AG04450 (cell line): ENCODE measurements at regions of chr6 and their contacts with region 1.

Region 1: GRCh38 chr6:133973109-133973971 is 20.3 kb downstream of the TBPL1 start:
- DNase-seq: peak; percentile 42
- H3K4me3 ChIP-seq: no peak overlapping the region
- H3K27ac ChIP-seq: no peak overlapping the region
- H3K27me3 ChIP-seq: no peaks in the 10 kb centered on the region
- CTCF ChIP-seq: peak; percentile 73

Region 2: DNA sequence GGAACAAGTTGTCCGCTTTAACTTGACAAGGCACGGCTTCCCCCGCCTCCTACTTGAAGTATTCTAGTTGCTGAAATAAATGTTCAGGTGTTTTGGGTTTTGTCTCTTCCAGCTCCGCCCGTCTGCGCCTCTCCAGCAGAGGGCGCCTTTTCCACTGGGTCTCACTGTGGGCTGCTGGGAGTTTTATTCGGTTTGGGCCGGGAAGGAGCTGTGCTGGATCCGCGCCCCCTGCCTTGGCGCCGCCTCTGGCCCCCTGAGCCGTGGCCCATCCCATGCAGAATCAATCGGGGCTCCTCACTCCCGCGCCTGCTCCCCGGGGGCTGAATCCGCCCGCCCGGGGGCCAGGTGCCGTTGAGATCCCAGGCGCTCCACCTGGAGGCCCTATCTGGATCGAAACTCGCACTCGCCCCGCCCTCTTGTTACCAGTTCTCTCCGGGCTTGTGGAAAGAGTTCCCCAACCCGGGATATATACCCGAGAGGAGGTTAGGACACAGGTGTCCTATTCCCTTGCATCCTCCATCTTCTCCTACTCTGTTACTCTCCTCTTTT is 135.5 kb before region 1 on chr6:
- CTCF ChIA-PET with region 1: no interaction called
- POLR2A ChIA-PET with region 1: no interaction called
- DNase-seq: no peak
- H3K4me3 ChIP-seq: no peak overlapping the region
- H3K27ac ChIP-seq: no peak overlapping the region
- H3K27me3 ChIP-seq: no peaks in the 10 kb centered on the region
- CTCF ChIP-seq: peak; percentile 41

Region 3: DNA sequence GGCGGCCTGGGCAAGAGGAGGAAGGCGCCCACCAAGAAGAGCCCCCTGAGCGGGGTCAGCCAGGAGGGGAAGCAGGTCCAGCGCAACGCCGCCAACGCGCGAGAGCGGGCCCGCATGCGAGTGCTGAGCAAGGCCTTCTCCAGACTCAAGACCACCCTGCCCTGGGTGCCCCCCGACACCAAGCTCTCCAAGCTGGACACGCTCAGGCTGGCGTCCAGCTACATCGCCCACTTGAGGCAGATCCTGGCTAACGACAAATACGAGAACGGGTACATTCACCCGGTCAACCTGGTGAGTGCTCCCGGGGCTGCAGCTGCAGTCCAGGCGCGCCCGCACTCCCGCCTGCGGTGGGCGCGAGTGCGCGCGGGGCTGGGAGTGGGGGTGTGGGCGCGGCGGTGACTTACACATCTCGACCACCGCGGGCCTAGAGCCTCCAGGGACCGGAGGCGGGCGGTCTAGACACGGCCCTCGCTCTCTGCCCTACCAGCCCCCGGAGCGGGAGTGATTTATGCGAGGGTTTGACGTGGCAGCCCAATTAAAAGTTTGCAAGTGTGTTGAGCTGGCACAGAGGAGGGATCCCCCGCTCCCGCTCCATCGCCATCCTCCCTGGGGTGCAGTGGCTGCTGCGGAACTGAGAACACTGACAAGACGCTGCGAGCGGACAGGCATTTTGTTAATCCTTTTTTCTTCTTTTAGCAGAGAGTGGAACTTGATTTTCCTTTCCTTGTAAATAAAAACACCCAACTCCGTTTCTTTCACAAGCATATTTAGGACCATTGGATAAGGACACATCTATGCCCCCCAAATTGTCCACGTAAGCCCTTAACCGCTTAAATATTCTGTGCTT is 83.6 kb before region 1 on chr6:
- CTCF ChIA-PET with region 1: no interaction called
- POLR2A ChIA-PET with region 1: no interaction called
- DNase-seq: no peak
- H3K4me3 ChIP-seq: peak overlapping the region; percentile 98
- H3K27ac ChIP-seq: peak overlapping the region; percentile 97
- H3K27me3 ChIP-seq: no peaks in the 10 kb centered on the region
- CTCF ChIP-seq: peak; percentile 14; the same call in 1 of the 2 replicates

Region 4: DNA sequence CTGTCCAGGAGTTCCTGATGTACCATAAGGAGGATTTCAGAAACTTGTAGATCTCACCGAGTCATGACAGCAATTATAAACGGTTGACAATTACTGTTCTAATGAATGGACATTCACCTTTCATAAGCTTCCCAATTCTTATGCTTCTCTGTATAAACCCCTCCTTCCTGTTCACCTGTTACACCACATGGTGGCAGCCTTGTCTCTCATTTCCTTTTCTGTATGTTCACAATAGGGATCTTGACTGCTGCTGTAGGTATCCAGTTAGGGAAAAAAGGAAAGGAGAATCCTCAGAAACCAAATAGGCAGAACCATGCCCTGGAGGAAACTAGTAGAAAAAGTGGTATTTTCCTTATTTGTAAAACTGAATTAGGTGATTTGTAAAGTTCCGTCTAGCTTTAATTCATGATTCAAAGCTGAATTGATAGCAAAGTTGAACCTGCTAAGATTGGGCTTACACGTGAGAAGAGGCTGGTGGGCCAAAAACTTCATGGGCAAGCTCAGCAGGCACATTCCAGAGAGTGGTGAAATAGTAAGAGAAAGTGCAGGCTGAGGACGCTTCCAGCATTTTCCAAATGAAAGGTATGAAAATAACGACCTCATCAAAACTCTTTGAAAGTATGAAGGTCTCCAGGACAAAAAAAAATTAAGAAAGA is 49.3 kb before region 1 on chr6:
- CTCF ChIA-PET with region 1: interaction called, 55 read pairs
- POLR2A ChIA-PET with region 1: no interaction called
- DNase-seq: peak; percentile 59
- H3K4me3 ChIP-seq: no peak overlapping the region
- H3K27ac ChIP-seq: no peak overlapping the region
- H3K27me3 ChIP-seq: no peaks in the 10 kb centered on the region
- CTCF ChIP-seq: peak; percentile 88

Region 5: GRCh38 chr6:133959667-133960368 is 13.5 kb before region 1 on chr6:
- CTCF ChIA-PET with region 1: interaction called, 35 read pairs
- POLR2A ChIA-PET with region 1: interaction called, 6 read pairs
- DNase-seq: no peak
- H3K4me3 ChIP-seq: no peak overlapping the region
- H3K27ac ChIP-seq: no peak overlapping the region
- H3K27me3 ChIP-seq: no peaks in the 10 kb centered on the region
- CTCF ChIP-seq: no peak

Region 6: GRCh38 chr6:134002821-134003220 is 29.5 kb after region 1 on chr6:
- CTCF ChIA-PET with region 1: interaction called, 15 read pairs
- POLR2A ChIA-PET with region 1: no interaction called
- DNase-seq: no peak
- H3K4me3 ChIP-seq: no peak overlapping the region
- H3K27ac ChIP-seq: no peak overlapping the region
- H3K27me3 ChIP-seq: no peaks in the 10 kb centered on the region
- CTCF ChIP-seq: no peak

Region 7: GRCh38 chr6:134058622-134059366 is 85.5 kb after region 1 on chr6:
- CTCF ChIA-PET with region 1: interaction called, 98 read pairs
- POLR2A ChIA-PET with region 1: interaction called, 4 read pairs
- DNase-seq: no peak
- H3K4me3 ChIP-seq: no peak overlapping the region
- H3K27ac ChIP-seq: no peak overlapping the region
- H3K27me3 ChIP-seq: no peaks in the 10 kb centered on the region
- CTCF ChIP-seq: no peak

Region 8: DNA sequence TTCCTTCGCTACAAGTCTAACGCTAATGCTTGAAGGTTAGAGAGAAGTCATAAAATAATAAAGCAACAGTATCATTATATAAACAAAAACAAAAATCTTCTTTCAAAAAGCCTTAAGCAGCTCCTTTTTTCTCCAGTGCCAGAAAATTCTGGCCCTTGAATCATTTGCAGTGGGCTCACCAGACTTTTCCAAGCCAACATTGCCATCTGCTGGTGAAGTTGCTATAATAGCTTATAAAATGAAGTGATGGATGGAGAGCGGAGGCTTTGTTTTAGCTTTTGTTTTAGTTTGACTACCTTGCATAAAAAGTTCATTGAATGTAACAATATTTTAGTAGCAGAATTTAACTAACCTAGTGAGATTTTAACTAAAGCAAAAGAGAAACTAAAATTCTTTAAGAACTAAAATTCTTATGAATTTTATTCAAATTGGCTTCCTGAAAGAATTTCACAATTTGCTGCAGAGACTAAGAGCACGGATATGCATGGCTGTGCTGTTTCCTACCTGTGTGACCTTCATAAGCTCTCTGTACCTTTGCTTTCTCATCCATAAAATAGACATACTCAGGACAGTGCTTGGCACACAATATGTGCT is 123.9 kb after region 1 on chr6:
- CTCF ChIA-PET with region 1: interaction called, 172 read pairs
- POLR2A ChIA-PET with region 1: no interaction called
- DNase-seq: peak; percentile 50
- H3K4me3 ChIP-seq: no peak overlapping the region
- H3K27ac ChIP-seq: no peak overlapping the region
- H3K27me3 ChIP-seq: no peaks in the 10 kb centered on the region
- CTCF ChIP-seq: peak; percentile 64

Region 9: GRCh38 chr6:134111062-134111677 is 137.8 kb after region 1 on chr6:
- CTCF ChIA-PET with region 1: interaction called, 10 read pairs
- POLR2A ChIA-PET with region 1: no interaction called
- DNase-seq: no peak
- H3K4me3 ChIP-seq: no peak overlapping the region
- H3K27ac ChIP-seq: no peak overlapping the region
- H3K27me3 ChIP-seq: no peaks in the 10 kb centered on the region
- CTCF ChIP-seq: peak; percentile 76